ENCODE measurements at regions of chr22 and their contacts with region 1.

Region 1: DNA sequence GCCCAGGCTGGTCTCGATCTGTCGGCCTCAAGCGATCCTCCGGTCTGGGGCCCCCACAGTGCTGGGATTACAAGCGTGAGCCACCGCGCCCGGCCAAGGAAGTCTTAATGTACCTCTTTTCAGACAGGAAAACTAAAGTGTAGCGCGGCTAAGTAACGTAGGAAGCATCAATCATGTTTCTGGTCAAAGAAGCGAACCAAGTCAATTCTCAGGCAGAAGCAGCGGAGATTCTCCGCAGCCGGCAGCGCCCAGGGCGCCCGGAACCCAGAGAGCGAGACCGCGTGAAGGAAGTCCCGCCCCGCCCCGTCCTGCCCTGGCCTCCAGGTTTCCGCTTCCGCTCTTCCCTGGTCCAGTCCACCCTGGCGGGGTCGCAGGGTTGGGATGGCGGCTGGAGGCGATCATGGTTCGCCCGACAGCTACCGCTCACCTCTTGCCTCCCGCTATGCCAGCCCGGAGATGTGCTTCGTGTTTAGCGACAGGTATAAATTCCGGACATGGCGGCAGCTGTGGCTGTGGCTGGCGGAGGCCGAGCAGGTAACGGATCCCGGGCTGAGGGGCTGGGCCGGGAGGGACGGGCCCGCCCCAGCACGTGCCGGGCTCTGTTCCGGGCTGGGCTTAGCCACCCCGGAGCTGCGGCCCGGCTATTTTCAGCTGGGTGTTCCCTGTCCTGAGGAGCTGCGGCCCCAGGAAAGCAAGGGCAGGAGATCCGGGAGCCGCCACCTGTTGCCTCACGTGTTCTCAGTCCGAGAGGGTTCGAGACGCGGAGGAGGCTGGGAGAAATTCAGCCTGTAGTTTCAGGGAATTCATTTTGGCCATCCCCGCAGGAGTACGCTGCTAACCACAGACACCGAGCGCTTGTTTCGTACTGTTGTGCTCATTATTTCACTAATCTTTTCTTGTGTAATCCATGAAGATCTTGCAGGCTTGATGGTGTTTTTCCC is at the start of gene ADSL:
- DNase-seq: peak; percentile 95
- total RNA-seq, gene ADSL: 47.8 TPM

Region 2: DNA sequence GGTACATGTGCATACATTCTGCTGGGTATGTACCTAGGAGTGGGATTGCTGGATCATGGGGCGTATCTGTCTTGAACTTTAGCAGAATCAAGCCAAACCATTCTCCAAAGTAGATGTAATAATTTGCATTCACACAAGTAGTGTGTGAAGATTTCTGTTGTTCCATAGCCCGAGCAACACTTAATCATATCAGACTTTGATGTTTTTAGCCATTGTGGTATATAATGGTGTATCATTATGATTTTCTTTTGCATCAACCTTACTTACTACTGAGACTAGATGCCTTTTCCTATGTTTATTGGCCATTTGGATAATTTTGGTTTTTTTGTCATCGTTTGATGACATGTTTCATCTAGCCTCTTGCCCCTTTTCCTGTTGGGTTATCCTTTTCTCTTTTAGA is 240.7 kb before region 1 on chr22:
- intact Hi-C with region 1: no loop called
- DNase-seq: no peak

Region 3: GRCh38 chr22:40183029-40183581 is 163.3 kb before region 1 on chr22:
- intact Hi-C with region 1: loop called (anchors 2 kb)
- DNase-seq: no peak

Region 4: DNA sequence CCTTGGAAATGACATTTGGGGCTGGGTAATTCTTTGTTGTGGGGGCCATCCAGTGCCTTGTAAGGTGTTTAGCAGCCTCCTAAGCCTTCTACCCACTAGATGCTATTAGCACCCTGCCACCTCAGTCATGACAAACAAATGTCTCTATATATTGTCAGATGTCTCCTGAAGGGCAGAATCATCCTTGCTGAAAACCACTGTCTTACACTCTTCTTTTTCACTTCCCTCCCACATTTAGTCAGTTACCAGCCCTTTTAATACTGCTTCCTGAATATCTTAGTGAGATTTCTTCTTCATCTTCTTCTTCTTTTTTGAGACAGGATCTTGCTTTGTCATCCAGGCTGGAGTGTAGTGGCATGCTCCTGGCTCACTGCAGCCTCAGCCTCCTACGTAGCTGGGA is 135.6 kb before region 1 on chr22:
- intact Hi-C with region 1: loop called (anchors 5 kb)
- DNase-seq: no peak

Region 5: DNA sequence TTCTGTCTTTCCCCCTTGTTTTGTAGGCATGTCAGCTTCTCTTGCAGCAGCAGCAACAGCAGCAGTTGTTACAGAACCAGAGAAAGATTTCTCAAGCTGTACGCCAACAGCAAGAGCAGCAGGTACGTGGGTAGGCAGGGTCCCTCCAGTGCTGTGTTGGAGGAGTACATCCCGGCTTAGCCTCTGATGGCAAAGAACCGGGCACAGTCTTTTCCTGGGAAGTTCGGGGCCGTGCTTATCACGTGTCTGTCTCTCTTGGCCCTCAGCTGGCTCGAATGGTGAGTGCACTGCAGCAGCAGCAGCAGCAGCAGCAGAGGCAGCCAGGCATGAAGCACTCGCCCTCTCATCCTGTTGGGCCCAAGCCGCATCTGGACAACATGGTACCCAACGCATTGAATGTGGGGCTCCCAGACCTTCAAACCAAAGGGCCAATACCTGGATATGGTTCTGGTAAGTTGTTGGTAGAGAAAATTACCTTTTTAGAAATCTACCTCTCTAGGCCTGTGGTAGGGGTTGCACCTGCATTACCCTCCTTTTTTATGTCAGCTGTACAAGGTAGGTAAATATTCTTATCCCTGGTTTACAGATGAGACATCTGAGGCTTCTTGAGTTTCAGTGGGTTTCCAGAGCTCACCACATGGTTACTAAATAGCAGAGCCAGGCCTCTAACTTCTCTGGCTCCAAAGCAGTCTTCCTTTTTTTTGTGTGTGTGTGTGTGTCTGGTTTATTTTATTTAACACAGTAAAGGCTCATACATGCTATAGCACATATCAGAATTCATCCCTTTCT is 45.4 kb before region 1 on chr22:
- intact Hi-C with region 1: no loop called
- DNase-seq: no peak

Measured in cardiac septum (tissue), 1 donor.